ENCODE measurements at regions of chr4 and their contacts with region 1.

Region 1: GRCh38 chr4:175253184-175253902 is 335.2 kb downstream of the ADAM29 start:
- DNase-seq: peak; percentile 38
- ATAC-seq: 0 out of 2 replicates have a peak, but pooled peaks have one; percentile 37
- H3K4me3 ChIP-seq: no peak overlapping the region
- H3K27ac ChIP-seq: no peak overlapping the region
- H3K4me1 ChIP-seq: no peaks in the 10 kb centered on the region
- H3K27me3 ChIP-seq: no peaks in the 10 kb centered on the region
- CTCF ChIP-seq: peak; percentile 67

Region 2: DNA sequence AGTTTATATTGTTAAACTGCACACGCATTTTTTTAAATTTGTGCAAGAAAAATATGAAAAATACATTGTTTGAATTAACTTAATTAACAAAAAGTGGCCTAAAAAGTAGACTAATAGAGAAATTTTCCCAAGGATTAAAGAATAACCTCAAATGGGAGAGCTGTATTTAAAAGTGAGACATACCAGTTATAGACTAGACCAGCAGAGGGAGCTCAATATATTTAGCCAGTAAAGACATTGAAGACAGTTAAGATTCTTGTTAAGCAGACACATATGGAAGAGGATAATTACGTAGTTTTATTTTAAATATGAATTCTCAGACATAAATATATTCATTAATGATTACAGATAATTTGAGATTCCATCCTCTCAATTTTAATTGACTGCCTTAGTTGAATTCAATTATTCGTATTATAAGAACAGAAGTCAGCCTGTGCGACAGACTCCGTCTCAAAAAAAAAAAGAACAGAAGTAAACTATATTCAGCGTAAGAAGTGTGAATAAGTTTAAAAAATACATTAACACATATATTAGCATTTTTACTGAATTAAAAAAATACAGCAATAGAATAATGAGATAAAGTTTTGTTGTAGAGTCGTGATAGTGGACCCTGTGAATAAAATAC is 489.1 kb before region 1 on chr4:
- CTCF ChIA-PET with region 1: no interaction called
- POLR2A ChIA-PET with region 1: no interaction called
- intact Hi-C with region 1: loop called (anchors 10 kb)
- DNase-seq: peak; percentile 62
- ATAC-seq: peak; percentile 56
- H3K4me3 ChIP-seq: no peak overlapping the region
- H3K27ac ChIP-seq: no peak overlapping the region
- H3K4me1 ChIP-seq: peaks cover 9% of the 10 kb centered on the region
- H3K27me3 ChIP-seq: no peaks in the 10 kb centered on the region
- CTCF ChIP-seq: peak; percentile 76

Region 3: GRCh38 chr4:174873931-174874330 is 379.4 kb before region 1 on chr4:
- CTCF ChIA-PET with region 1: no interaction called
- POLR2A ChIA-PET with region 1: no interaction called
- intact Hi-C with region 1: loop called (anchors 2 kb)
- DNase-seq: peak; percentile 63
- ATAC-seq: no peak
- H3K4me3 ChIP-seq: no peak overlapping the region
- H3K27ac ChIP-seq: no peak overlapping the region
- H3K4me1 ChIP-seq: peaks cover 16% of the 10 kb centered on the region
- H3K27me3 ChIP-seq: no peaks in the 10 kb centered on the region
- CTCF ChIP-seq: peak; percentile 56

Measured in PC-3 (cell line).